CD4-positive, alpha-beta T cell (primary cell): ENCODE measurements at regions of chr1 and their contacts with region 1.

Region 1: GRCh38 chr1:243255791-243256512 is at the start of gene SDCCAG8:
- DNase-seq: peak; percentile 85 to 98 (median 90)
- ATAC-seq: peak; percentile 73
- H3K4me3 ChIP-seq: peak within 1 kb of the TSS; percentile 99
- H3K4me3 Mint-ChIP-seq: peak within 1 kb of the TSS; percentile 98
- H3K27ac ChIP-seq: peak within 1 kb of the TSS; percentile 97 to 99
- H3K27ac Mint-ChIP-seq: peak within 1 kb of the TSS; percentile 100
- H3K4me1 ChIP-seq: peaks cover 20% of the 10 kb centered on the region
- H3K4me1 Mint-ChIP-seq: peaks cover 61% of the 10 kb centered on the region
- H3K27me3 ChIP-seq: no peaks in the 10 kb centered on the region
- H3K27me3 Mint-ChIP-seq: no peaks in the 10 kb centered on the region
- CTCF ChIP-seq: no peak
- total RNA-seq, gene SDCCAG8: 18.3 to 21.2 TPM

Region 2: DNA sequence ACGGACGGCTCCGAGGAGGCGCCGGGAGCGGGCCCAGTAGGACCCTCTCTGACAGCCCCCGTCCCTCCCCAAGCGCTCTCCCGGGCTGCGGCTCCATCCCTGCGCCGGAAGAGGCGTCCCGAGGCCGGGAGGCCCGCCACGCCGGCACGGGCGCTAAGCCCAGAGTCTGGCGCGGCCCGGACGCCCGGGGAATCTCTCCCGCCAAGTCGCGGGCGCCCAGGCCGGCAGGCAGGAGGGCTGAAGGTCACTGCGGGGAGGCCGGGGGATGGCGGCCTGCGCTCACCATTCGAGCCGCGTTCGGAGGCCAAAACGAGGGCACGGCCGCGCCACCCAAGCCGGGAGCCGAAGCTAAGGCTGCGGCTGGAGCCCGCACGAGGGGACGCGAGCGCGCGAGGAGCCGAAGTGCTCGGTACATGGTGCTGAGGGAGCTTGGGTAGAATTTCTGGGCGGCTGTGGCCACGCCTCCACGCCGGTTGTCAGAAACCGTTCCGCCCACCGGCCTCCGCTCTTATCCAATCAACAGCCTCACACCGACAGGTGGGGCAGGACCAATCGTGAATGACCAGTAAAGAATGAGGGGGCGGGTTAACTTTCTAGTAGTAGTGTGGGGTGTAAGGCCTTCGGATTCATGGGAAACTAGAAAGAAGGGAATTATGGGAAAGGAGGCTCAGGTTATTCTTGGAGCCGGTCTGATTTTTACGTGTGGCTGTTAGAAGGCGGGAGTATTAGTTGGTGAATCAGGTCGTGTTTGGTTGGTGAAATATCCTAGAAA is 1736.5 kb before region 1 on chr1 and contains the start of gene FH:
- CTCF ChIA-PET with region 1: no interaction called
- POLR2A ChIA-PET with region 1: interaction called, 6 read pairs
- intact Hi-C with region 1: loop called in 1 of 2 experiments (anchors 5 kb)
- DNase-seq: peak; percentile 82 to 98 (median 91)
- ATAC-seq: peak; percentile 97
- H3K4me3 ChIP-seq: peak within 1 kb of the TSS; percentile 64
- H3K4me3 Mint-ChIP-seq: peak within 1 kb of the TSS; percentile 97
- H3K27ac ChIP-seq: peak within 1 kb of the TSS in 1 of 2 donors; percentile 70
- H3K27ac Mint-ChIP-seq: peak within 1 kb of the TSS; percentile 85
- H3K4me1 ChIP-seq: peaks cover 5% of the 10 kb centered on the region
- H3K4me1 Mint-ChIP-seq: peaks cover 32% of the 10 kb centered on the region
- H3K27me3 ChIP-seq: peaks cover 8% of the 10 kb centered on the region in 2 experiments
- H3K27me3 Mint-ChIP-seq: peaks cover 25% of the 10 kb centered on the region
- CTCF ChIP-seq: no peak
- total RNA-seq, gene FH: 13.0 to 16.9 TPM

Region 3: GRCh38 chr1:243179714-243180113 is 76.2 kb before region 1 on chr1:
- CTCF ChIA-PET with region 1: no interaction called
- POLR2A ChIA-PET with region 1: no interaction called
- intact Hi-C with region 1: loop called in 1 of 2 experiments (anchors 2 kb)
- DNase-seq: peak in 3 of 14 experiments; percentile 10 to 29 (median 28)
- ATAC-seq: peak; percentile 85
- H3K4me3 ChIP-seq: no peak overlapping the region
- H3K4me3 Mint-ChIP-seq: no peak overlapping the region
- H3K27ac ChIP-seq: no peak overlapping the region
- H3K27ac Mint-ChIP-seq: peak overlapping the region; percentile 7
- H3K4me1 ChIP-seq: no peaks in the 10 kb centered on the region
- H3K4me1 Mint-ChIP-seq: peaks cover 22% of the 10 kb centered on the region
- H3K27me3 ChIP-seq: no peaks in the 10 kb centered on the region
- H3K27me3 Mint-ChIP-seq: no peaks in the 10 kb centered on the region
- CTCF ChIP-seq: no peak

Region 4: GRCh38 chr1:243230914-243231313 is 25.0 kb before region 1 on chr1:
- CTCF ChIA-PET with region 1: interaction called, 10 read pairs
- POLR2A ChIA-PET with region 1: interaction called, 11 read pairs
- intact Hi-C with region 1: no loop called
- DNase-seq: peak in 1 of 14 experiments; percentile 30
- ATAC-seq: peak; percentile 57
- H3K4me3 ChIP-seq: no peak overlapping the region
- H3K4me3 Mint-ChIP-seq: no peak overlapping the region
- H3K27ac ChIP-seq: no peak overlapping the region
- H3K27ac Mint-ChIP-seq: no peak overlapping the region
- H3K4me1 ChIP-seq: no peaks in the 10 kb centered on the region
- H3K4me1 Mint-ChIP-seq: peaks cover 26% of the 10 kb centered on the region
- H3K27me3 ChIP-seq: no peaks in the 10 kb centered on the region
- H3K27me3 Mint-ChIP-seq: no peaks in the 10 kb centered on the region
- CTCF ChIP-seq: no peak

Region 5: GRCh38 chr1:243508303-243508713 is 252.4 kb after region 1 on chr1:
- CTCF ChIA-PET with region 1: no interaction called
- POLR2A ChIA-PET with region 1: no interaction called
- intact Hi-C with region 1: no loop called
- DNase-seq: peak in 9 of 14 experiments; percentile 12 to 68 (median 36)
- ATAC-seq: peak; percentile 96
- H3K4me3 ChIP-seq: no peak overlapping the region
- H3K4me3 Mint-ChIP-seq: peak overlapping the region; percentile 66
- H3K27ac ChIP-seq: no peak overlapping the region
- H3K27ac Mint-ChIP-seq: peak overlapping the region; percentile 91
- H3K4me1 ChIP-seq: peaks cover 15% of the 10 kb centered on the region
- H3K4me1 Mint-ChIP-seq: peaks cover 42% of the 10 kb centered on the region
- H3K27me3 ChIP-seq: no peaks in the 10 kb centered on the region
- H3K27me3 Mint-ChIP-seq: no peaks in the 10 kb centered on the region
- CTCF ChIP-seq: no peak

Region 6: GRCh38 chr1:243850452-243851256 is 594.7 kb after region 1 on chr1:
- CTCF ChIA-PET with region 1: no interaction called
- POLR2A ChIA-PET with region 1: interaction called, 5 read pairs
- intact Hi-C with region 1: loop called in 1 of 2 experiments (anchors 10 kb)
- DNase-seq: peak in 11 of 14 experiments; percentile 74 to 95 (median 82)
- ATAC-seq: peak; percentile 38
- H3K4me3 ChIP-seq: peak overlapping the region; percentile 64
- H3K4me3 Mint-ChIP-seq: peak overlapping the region; percentile 98
- H3K27ac ChIP-seq: peak overlapping the region; percentile 61 to 92
- H3K27ac Mint-ChIP-seq: peak overlapping the region; percentile 96
- H3K4me1 ChIP-seq: peaks cover 6% of the 10 kb centered on the region
- H3K4me1 Mint-ChIP-seq: peaks cover 40% of the 10 kb centered on the region
- H3K27me3 ChIP-seq: peaks cover 0 to 2% of the 10 kb centered on the region in 2 experiments
- H3K27me3 Mint-ChIP-seq: no peaks in the 10 kb centered on the region
- CTCF ChIP-seq: no peak

Region 7: GRCh38 chr1:244652699-244653466 is 1396.9 kb after region 1 on chr1 and contains the start of gene DESI2:
- CTCF ChIA-PET with region 1: no interaction called
- POLR2A ChIA-PET with region 1: interaction called, 6 read pairs
- intact Hi-C with region 1: loop called in 1 of 2 experiments (anchors 5 kb)
- DNase-seq: peak; percentile 95 to 100 (median 97)
- ATAC-seq: peak; percentile 92
- H3K4me3 ChIP-seq: peak within 1 kb of the TSS; percentile 80
- H3K4me3 Mint-ChIP-seq: peak within 1 kb of the TSS; percentile 88
- H3K27ac ChIP-seq: peak within 1 kb of the TSS; percentile 53 to 74
- H3K27ac Mint-ChIP-seq: peak within 1 kb of the TSS; percentile 83
- H3K4me1 ChIP-seq: peaks cover 23% of the 10 kb centered on the region
- H3K4me1 Mint-ChIP-seq: peaks cover 21% of the 10 kb centered on the region
- H3K27me3 ChIP-seq: no peaks in the 10 kb centered on the region
- H3K27me3 Mint-ChIP-seq: no peaks in the 10 kb centered on the region
- CTCF ChIP-seq: peak; percentile 46
- total RNA-seq, gene DESI2: 12.9 to 13.7 TPM